Heart left ventricle (tissue), 16 donors: ENCODE measurements at regions of chr20 and their contacts with region 1.

Region 1: DNA sequence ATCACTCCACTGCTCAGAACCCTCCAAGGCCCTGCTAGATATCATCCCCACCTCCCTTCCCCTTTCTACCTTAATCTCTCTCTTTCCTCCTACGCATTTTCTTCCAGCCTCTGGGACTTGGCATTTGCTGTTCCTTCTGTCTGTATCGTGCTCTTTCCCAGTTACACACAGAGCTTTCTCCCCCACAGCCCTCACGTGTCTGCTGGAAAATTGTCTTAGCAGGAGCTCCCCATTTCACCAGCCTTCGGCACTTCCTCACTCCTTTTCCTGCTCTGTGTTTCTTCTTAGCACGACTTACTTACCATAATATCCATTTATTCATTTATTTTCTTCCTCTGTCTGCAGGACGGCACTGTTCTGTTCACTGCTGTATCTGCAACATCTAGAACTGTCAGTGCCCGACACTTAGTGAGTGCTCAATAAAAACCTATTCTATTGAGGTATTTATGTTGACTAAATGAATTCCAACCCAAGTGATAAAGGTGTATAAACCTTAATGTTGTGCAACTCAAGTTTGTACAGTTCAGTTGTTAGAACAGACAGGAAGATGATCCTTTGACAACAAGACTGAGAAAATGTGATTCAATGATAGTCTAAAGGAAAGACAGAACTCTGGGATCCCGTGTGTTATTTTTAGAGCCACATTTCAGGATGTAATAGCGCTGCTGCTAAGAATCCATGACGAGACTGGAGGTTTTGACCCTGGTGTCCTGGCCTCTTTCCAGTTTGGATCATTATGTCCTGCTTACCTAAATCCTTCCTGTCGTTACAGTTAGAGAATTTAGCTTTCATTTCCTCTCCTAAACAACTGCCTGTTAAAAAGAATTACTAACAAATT is 170.1 kb upstream of the LAMP5 start:
- DNase-seq: peak in 3 of 5 donors; percentile 38 to 63 (median 62)
- ATAC-seq: peak; percentile 68 to 88 (median 76)
- H3K4me3 ChIP-seq: peak overlapping the region in 1 of 12 donors; percentile 3
- H3K27ac ChIP-seq: peak overlapping the region in 11 of 12 donors; percentile 28 to 64 (median 50)
- H3K4me1 ChIP-seq: peaks cover 0 to 45% (median 31%) of the 10 kb centered on the region in 12 donors
- H3K27me3 ChIP-seq: no peaks in the 10 kb centered on the region
- CTCF ChIP-seq: no peak
- POLR2A ChIP-seq: no peak

Region 2: DNA sequence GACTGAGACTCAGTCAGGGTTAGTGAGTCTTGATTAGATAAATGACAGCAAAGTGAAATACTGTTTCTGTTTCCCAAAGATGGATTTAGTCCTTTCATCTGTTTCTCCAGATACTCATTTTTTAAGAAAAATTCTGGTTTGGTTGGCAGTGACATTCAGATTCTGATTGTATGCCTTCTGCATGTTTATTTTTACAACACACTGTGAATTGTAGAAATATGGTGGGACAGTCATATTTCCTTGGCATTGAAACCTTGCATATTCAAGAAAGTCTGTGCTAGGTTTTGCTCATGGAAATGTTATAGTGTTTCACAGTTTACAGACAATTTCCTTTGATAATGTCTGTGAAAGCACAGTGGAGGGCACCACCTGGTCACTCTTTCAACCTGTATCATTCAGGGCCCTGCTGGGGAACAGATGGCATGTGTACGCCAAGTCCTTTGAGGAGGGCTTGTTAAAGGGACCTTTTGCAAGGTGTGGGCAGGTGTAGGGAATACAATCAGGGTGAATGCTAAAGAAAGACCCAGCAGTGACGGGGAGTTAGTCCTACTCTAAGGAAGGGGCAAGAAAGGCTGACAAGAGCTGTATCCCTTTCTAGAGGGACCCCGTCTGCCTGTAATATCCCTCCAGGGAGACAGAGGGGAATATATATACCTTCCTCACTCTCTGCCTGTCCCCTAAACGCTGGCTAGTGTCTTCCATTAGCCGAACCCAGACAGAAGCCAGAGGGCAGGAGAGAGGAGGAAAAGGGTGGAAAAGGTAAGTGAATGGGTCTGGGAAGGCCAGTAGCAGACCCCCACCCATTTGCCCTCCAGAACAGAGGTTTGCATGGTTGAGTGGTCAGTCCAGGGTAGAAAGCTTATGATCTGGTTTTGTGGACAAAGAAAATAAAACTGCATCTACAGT is 265.2 kb before region 1 on chr20:
- intact Hi-C with region 1: loop called in 3 of 10 experiments (anchors 5 to 10 kb)
- DNase-seq: no peak
- ATAC-seq: no peak
- H3K4me3 ChIP-seq: no peak overlapping the region
- H3K27ac ChIP-seq: no peak overlapping the region
- H3K4me1 ChIP-seq: peaks cover 0 to 63% (median 34%) of the 10 kb centered on the region in 12 donors
- H3K27me3 ChIP-seq: no peaks in the 10 kb centered on the region
- CTCF ChIP-seq: no peak
- POLR2A ChIP-seq: no peak

Region 3: GRCh38 chr20:9215539-9215938 is 128.8 kb before region 1 on chr20:
- intact Hi-C with region 1: loop called in 2 of 10 experiments (anchors 10 kb)
- DNase-seq: no peak
- ATAC-seq: no peak
- H3K4me3 ChIP-seq: no peak overlapping the region
- H3K27ac ChIP-seq: no peak overlapping the region
- H3K4me1 ChIP-seq: peaks cover 0 to 35% (median 15%) of the 10 kb centered on the region in 12 donors
- H3K27me3 ChIP-seq: no peaks in the 10 kb centered on the region
- CTCF ChIP-seq: peak in 5 of 12 donors; percentile 16 to 43 (median 25)
- POLR2A ChIP-seq: no peak

Region 4: DNA sequence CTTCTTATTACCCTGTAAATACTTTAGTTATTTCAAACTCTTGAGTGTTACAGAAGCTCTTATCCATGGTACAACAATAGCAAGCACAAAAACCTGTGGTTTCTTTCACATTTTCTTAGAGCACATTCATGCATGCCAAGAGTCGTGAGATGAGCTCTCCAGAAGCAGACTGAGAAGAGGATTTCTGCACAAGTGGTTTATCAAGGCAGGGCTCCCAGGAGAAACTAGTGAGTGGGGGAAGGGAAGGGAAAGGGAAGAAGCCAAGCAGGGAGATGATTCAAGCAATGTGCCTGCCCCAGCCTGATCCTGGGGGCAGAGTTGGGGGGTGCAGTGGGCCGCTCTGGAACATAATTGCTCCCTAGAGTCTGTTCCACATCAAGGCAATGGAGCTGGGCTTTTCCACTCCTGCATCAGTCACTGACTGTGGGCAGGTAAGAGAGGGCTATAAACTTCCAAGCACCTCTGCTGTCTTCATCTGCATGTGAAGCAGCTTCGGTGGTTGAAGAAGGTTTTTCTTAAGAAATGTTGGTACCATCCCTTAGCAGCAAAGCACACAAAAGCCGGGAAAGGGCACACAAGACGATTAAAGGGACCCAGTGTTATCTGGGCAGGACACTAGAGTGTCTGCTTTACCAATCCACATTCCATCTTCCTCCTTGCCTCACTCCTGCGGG is 123.3 kb before region 1 on chr20:
- intact Hi-C with region 1: loop called in 2 of 10 experiments (anchors 10 kb)
- DNase-seq: peak in 1 of 5 donors; percentile 25
- ATAC-seq: peak in 1 of 4 donors; percentile 7
- H3K4me3 ChIP-seq: no peak overlapping the region
- H3K27ac ChIP-seq: peak overlapping the region in 2 of 12 donors; percentile 10 to 16
- H3K4me1 ChIP-seq: peaks cover 4 to 56% (median 29%) of the 10 kb centered on the region in 12 donors
- H3K27me3 ChIP-seq: no peaks in the 10 kb centered on the region
- CTCF ChIP-seq: no peak
- POLR2A ChIP-seq: no peak